ENCODE measurements at regions of chrX and their contacts with region 1.

Region 1: DNA sequence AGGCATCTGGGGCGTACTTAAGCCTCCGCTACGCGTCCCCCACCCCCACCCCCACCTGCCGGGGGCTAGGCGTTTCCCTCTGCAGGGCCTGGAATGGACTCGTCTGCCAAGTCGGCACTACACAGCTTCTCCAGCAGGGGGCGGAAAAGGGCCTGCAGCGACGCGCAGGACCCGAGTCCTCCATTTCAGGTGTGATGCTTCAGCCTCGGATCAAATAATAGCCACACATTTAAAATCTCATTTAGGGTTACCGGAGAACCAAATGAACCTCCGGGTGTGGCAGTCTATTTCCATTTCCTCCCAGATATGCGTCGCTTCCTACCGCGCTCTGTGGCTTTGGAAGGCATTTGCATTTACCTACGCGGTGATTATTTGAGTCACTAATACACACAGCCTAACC is 2.9 kb downstream of the PAK3 start:
- DNase-seq: peak; percentile 60
- H3K4me3 Mint-ChIP-seq: no peak overlapping the region
- H3K27ac Mint-ChIP-seq: no peak overlapping the region
- H3K4me1 Mint-ChIP-seq: peaks cover 8% of the 10 kb centered on the region
- H3K27me3 Mint-ChIP-seq: peaks cover 48% of the 10 kb centered on the region
- CTCF ChIP-seq: peak; percentile 70

Region 2: GRCh38 chrX:110450050-110450449 is 648.8 kb before region 1 on chrX:
- CTCF ChIA-PET with region 1: no interaction called
- intact Hi-C with region 1: loop called (anchors 1 kb)
- DNase-seq: peak; percentile 70
- H3K4me3 Mint-ChIP-seq: no peak overlapping the region
- H3K27ac Mint-ChIP-seq: no peak overlapping the region
- H3K4me1 Mint-ChIP-seq: no peaks in the 10 kb centered on the region
- H3K27me3 Mint-ChIP-seq: peaks cover 63% of the 10 kb centered on the region
- CTCF ChIP-seq: peak; percentile 39

Region 3: DNA sequence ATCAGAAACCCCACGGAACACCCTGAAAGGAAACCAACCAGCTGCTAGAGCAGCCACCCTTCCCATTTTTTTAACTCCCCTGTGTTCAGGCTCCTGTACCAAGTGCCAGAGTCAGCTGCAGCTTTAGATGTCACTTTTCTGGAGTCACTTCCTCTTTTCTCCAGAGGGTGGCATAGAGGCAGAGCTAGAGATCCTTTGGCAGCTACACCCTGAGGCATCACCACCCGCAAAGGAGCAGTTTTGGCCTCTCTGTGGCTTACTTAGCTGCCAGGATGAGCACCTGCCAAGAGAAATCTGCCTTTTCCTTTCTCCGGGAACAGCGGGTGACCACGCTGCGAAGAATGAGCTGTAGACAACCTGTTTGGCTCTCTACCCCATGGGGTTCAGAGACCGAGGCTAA is 245.3 kb before region 1 on chrX:
- CTCF ChIA-PET with region 1: interaction called, 9 read pairs
- intact Hi-C with region 1: loop called (anchors 1 kb)
- DNase-seq: peak; percentile 24
- H3K4me3 Mint-ChIP-seq: no peak overlapping the region
- H3K27ac Mint-ChIP-seq: no peak overlapping the region
- H3K4me1 Mint-ChIP-seq: no peaks in the 10 kb centered on the region
- H3K27me3 Mint-ChIP-seq: peaks cover 14% of the 10 kb centered on the region
- CTCF ChIP-seq: peak; percentile 16

Region 4: GRCh38 chrX:110954428-110955100 is 144.3 kb before region 1 on chrX:
- CTCF ChIA-PET with region 1: no interaction called
- intact Hi-C with region 1: no loop called
- DNase-seq: no peak
- H3K4me3 Mint-ChIP-seq: no peak overlapping the region
- H3K27ac Mint-ChIP-seq: no peak overlapping the region
- H3K4me1 Mint-ChIP-seq: no peaks in the 10 kb centered on the region
- H3K27me3 Mint-ChIP-seq: no peaks in the 10 kb centered on the region
- CTCF ChIP-seq: no peak

Region 5: DNA sequence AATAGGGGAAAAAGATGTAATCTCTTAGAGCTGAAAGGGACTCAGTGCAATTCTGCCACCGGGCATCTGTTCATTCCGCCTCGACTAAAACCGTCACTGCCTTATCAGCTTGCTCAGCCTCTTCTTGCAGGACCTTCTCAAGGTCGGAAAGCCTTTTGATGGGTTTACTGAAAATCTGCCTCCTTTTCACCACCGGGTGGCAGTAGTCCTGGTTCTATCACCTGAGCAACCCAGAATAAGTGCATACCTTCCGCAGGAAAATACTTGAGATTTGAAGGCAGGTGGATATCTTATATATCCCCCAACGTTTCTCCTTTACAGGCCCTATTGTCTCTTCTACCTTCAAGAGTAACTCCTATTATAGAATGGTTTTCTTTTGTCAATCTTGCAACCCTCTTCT is 106.3 kb before region 1 on chrX:
- CTCF ChIA-PET with region 1: interaction called, 6 read pairs
- intact Hi-C with region 1: loop called (anchors 1 kb)
- DNase-seq: peak; percentile 28
- H3K4me3 Mint-ChIP-seq: no peak overlapping the region
- H3K27ac Mint-ChIP-seq: no peak overlapping the region
- H3K4me1 Mint-ChIP-seq: no peaks in the 10 kb centered on the region
- H3K27me3 Mint-ChIP-seq: peaks cover 37% of the 10 kb centered on the region
- CTCF ChIP-seq: peak; percentile 22

Region 6: DNA sequence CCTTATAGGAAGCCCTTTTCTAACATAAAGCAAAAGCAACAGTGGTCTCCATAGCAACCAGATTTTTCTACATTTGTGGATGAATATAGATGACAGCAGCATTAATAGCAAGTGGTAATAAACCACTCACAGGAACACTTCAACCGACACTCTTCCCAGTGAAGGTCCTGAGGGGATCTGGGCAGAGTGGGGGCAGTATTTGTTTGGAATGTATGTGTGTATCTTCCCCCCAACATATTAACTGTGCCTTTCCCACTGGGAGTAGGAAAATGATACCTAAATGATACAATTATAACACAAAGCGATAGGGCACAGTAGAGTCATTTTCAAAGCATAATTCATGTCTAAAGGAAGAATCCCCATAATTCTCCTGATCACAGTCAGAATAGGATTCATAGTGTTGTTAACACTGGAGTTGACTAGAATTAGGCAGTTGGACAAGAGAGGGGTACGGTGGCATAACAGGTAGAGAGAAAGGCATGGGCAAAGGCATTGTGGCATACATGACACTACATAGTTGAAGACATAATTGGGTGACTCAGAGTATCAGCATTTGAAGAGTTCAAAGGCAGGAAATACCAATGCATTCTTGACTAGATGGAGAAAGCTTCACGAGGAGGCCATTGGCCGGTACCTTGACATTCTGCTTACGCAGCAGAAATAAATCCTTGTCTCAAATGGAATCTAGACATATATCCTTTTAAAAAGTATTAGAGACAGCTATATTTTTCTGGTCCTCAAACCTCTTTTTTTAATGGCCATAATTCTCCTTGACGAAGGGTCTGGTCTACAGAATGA is 156.2 kb after region 1 on chrX:
- CTCF ChIA-PET with region 1: no interaction called
- intact Hi-C with region 1: no loop called
- DNase-seq: no peak
- H3K4me3 Mint-ChIP-seq: no peak overlapping the region
- H3K27ac Mint-ChIP-seq: no peak overlapping the region
- H3K4me1 Mint-ChIP-seq: no peaks in the 10 kb centered on the region
- H3K27me3 Mint-ChIP-seq: peaks cover 7% of the 10 kb centered on the region
- CTCF ChIP-seq: no peak

Region 7: DNA sequence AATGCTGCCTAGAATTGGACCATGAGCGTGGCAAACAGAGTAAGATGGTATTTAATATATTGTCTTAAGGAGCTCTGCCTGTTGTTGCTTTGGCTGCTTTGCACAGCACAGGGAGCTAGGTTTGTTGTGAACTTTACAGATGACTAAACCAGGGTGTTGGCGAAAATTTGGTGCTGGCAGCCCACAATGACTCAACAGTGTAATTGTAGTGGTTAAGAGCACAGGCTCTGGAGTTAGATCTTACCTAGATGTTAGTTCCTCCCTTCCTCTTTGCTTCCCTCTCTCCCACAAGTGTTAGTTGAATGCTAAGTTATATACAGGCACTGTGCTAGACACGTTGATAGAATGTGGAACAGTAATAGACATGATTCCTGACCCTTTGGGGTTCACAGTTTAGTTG is 1112.6 kb after region 1 on chrX:
- CTCF ChIA-PET with region 1: no interaction called
- intact Hi-C with region 1: no loop called
- DNase-seq: no peak
- H3K4me3 Mint-ChIP-seq: no peak overlapping the region
- H3K27ac Mint-ChIP-seq: no peak overlapping the region
- H3K4me1 Mint-ChIP-seq: no peaks in the 10 kb centered on the region
- H3K27me3 Mint-ChIP-seq: no peaks in the 10 kb centered on the region
- CTCF ChIP-seq: no peak

Measured in Calu3 (cell line).